Activated naive CD4-positive, alpha-beta T cell treated with anti-CD3 and anti-CD28 coated beads for 36 hours (primary cell): ENCODE measurements at regions of chr3 and their contacts with region 1.

Region 1: DNA sequence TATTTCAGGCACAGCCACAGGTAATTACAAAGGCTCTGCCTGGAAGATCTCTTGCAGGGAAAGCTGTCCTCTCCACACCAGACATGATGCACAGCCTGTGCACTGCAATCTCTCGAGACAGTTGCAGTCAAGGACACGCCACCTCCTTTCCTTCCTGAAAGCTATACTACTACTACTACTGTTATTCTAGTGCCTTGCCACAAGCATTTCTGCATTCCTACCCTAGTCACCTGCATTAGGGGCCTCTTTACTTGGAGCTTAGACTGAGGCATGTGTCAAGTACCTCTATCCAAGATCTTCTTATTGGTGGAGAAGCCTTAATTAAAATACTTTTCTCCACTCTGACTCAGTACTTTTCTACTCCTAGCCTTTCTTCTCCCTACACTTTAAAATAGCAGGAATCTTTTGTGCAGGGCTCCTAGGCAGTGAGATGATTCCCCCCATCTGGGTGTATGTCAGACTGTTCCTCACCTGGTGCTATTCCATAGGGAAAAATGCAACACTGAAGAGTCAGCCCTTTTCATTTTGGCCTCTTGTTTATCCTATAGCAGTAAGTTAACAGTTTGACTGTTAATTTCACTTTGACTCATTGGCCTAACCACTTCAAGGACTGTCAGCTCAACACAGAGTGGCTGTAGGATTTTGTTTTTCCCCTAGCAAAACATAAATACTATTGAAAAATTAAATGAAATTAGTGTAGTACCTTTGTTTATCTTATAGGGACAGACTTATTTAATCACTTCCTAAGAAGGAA is 78.9 kb downstream of the ESYT3 start:
- DNase-seq: peak; percentile 10
- H3K4me3 Mint-ChIP-seq: no peak overlapping the region
- H3K27ac Mint-ChIP-seq: no peak overlapping the region
- H3K4me1 Mint-ChIP-seq: peaks cover 6% of the 10 kb centered on the region
- H3K27me3 Mint-ChIP-seq: no peaks in the 10 kb centered on the region

Region 2: GRCh38 chr3:138434276-138434874 is 78.9 kb before region 1 on chr3 and contains the start of gene ESYT3:
- CTCF ChIA-PET with region 1: no interaction called
- intact Hi-C with region 1: no loop called
- DNase-seq: peak; percentile 82
- H3K4me3 Mint-ChIP-seq: peak within 1 kb of the TSS; percentile 75
- H3K27ac Mint-ChIP-seq: no peak within 1 kb of the TSS
- H3K4me1 Mint-ChIP-seq: peaks cover 11% of the 10 kb centered on the region
- H3K27me3 Mint-ChIP-seq: peaks cover 55% of the 10 kb centered on the region
- total RNA-seq, gene ESYT3: 0.96 to 1.1 TPM

Region 3: GRCh38 chr3:138573138-138573537 is 59.9 kb after region 1 on chr3:
- CTCF ChIA-PET with region 1: no interaction called
- intact Hi-C with region 1: loop called (anchors 5 kb)
- DNase-seq: no peak
- H3K4me3 Mint-ChIP-seq: no peak overlapping the region
- H3K27ac Mint-ChIP-seq: no peak overlapping the region
- H3K4me1 Mint-ChIP-seq: peaks cover 28% of the 10 kb centered on the region
- H3K27me3 Mint-ChIP-seq: no peaks in the 10 kb centered on the region